ENCODE measurements at regions of chr13 and their contacts with region 1.

Region 1: DNA sequence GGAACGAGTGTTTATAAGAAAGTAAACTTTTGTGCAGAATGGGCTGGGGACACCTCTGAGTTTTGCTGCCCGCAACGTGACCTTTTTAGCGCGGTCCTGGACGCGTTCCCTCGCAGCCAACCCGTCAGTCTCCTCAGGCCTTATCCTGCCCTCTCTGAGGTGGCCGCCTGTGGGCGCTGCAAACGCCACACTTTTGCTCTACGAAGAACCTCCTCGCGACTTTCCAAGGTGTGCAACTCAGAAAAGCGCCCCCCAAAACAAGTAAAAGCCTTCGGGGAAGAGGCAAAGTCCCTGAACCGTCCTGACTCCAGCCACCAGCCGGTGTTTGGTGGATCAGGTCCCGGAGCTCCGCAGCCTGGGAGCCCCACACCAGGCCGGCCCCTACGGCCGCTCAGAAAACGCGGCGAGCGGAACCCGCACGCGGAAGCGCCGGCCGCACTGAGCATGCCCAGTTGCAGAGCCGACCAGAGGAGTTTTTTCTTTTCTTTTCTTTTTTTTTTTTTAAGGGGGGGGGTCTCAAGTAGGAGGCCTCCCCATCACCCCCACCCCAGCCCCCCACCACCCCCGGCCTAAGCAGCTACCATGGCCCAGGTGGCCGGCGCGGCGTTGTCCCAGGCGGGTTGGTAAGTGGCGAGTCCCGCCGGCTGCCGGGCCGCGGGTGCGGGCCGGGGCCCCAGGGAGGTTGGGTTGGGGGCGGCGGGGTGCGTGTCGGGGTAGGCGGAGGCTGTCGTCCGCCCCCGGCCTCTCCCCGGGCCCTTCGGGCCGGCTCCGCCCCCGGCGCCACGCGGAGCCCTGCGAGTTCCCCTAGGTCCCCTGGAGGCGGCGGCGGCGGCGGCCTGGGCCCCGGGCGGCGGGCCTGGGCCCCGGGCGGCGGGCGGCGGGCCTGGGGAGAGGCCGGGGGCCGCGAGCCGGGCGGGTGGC is at the start of gene TDRD3:
- DNase-seq: peak; percentile 87
- ATAC-seq: peak; percentile 83 to 87
- total RNA-seq, gene TDRD3: 34.5 to 45.4 TPM

Region 2: GRCh38 chr13:60163478-60164233 is 233.4 kb before region 1 on chr13 and contains the start of gene DIAPH3:
- intact Hi-C with region 1: loop called in 1 of 2 experiments (anchors 10 kb)
- DNase-seq: peak; percentile 97
- ATAC-seq: peak; percentile 100
- total RNA-seq, gene DIAPH3: 0.26 to 0.50 TPM

Measured in left cardiac atrium (tissue), 4 donors.